H1 (cell line): ENCODE measurements at regions of chr3 and their contacts with region 1.

Region 1: DNA sequence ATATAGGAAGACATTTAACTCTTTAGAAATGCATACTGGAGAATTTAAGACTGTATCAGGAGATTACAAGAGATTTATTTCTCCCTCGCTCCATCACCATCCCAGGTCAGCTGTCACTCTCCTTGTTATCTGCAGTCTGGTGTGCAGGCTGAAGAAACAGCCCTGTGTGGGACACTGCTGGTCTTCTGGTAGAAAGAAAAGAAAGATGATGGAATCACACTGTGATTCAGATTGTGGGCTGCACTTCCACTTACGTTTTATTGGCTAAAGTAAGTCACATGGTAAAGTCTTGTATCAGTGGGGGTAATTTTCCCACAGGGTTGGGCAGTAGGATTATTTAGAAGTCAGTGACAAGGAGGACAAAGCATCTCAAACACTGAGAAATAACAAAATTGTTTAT is 18.1 kb upstream of the ATP1B3 start:
- DNase-seq: no peak
- H3K4me3 ChIP-seq: no peak overlapping the region
- H3K27ac ChIP-seq: no peak overlapping the region
- H3K4me1 ChIP-seq: no peaks in the 10 kb centered on the region
- H3K27me3 ChIP-seq: no peaks in the 10 kb centered on the region
- CTCF ChIP-seq: no peak
- EP300 ChIP-seq: no peak
- POLR2A ChIP-seq: no peak
- RAD21 ChIP-seq: no peak

Region 2: GRCh38 chr3:141845407-141846049 is 12.8 kb before region 1 on chr3:
- CTCF ChIA-PET with region 1: interaction called, 13 read pairs
- POLR2A ChIA-PET with region 1: no interaction called
- DNase-seq: peak; percentile 34 to 53
- H3K4me3 ChIP-seq: no peak overlapping the region
- H3K27ac ChIP-seq: no peak overlapping the region
- H3K4me1 ChIP-seq: peaks cover 0 to 4% (median 0%) of the 10 kb centered on the region in 4 experiments; a peak in 1 of 7 replicates
- H3K27me3 ChIP-seq: no peaks in the 10 kb centered on the region
- CTCF ChIP-seq: peak; percentile 17 to 43 (median 32); a peak in 3 of 4 replicates
- EP300 ChIP-seq: no peak
- POLR2A ChIP-seq: no peak
- RAD21 ChIP-seq: peak; percentile 43 to 63